BJ (cell line): ENCODE measurements at regions of chr1 and their contacts with region 1.

Region 1: DNA sequence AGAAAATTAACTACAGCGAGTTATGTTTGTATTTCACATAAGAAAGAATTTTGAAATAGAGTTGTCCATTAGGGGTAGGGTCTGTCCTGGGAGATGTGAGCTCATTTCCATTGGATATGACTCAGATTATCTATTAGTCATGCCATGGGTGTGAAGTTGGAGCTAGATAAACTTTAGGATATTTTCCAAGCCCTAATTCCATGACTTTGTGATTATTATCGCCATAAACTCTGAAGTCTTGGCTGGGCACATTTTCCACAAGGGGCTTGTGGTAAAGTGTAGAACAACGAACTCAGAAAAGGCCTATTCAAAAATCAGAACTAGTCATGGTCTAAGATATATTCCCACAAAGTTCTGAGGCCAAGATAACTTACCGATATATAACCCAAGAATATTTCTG is 396.6 kb downstream of the DPYD start:
- DNase-seq: no peak
- H3K4me3 ChIP-seq: no peak overlapping the region
- H3K27me3 ChIP-seq: no peaks in the 10 kb centered on the region
- CTCF ChIP-seq: no peak

Region 2: DNA sequence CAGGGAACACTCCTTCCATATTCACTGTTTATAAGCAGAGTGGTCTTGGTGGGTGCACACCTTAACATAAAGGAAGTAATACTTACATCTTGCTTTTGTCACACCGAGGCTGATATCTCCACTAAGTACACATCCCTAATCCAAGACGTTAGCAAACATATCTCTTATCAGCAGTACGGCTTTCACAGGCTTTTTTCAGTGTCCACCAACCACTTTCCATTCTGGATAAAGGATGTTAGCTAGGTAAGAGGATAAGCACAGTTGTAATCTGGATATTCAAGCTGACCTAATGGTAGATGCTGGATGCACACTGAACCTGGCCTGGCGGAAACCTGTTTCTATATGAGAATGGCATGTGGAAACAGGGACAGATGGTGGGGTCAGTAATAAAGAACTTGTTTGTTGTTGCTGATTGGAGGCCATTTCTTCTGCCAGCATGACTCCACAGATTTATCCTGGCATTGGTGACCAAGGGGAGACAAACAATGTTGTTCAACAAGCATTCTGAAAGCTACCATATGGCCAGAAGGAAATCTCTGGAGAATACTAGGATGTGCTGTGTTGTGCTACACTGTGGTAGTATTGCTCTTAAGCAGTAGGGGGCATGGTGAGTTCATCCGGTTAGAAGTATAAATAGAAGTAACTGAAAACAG is 386.2 kb before region 1 on chr1:
- CTCF ChIA-PET with region 1: interaction called, 21 read pairs
- POLR2A ChIA-PET with region 1: no interaction called
- DNase-seq: no peak
- H3K4me3 ChIP-seq: no peak overlapping the region
- H3K27me3 ChIP-seq: no peaks in the 10 kb centered on the region
- CTCF ChIP-seq: peak; percentile 69

Region 3: GRCh38 chr1:97243973-97244560 is 280.1 kb before region 1 on chr1:
- CTCF ChIA-PET with region 1: interaction called, 14 read pairs
- POLR2A ChIA-PET with region 1: no interaction called
- DNase-seq: no peak
- H3K4me3 ChIP-seq: no peak overlapping the region
- H3K27me3 ChIP-seq: no peaks in the 10 kb centered on the region
- CTCF ChIP-seq: peak; percentile 50

Region 4: DNA sequence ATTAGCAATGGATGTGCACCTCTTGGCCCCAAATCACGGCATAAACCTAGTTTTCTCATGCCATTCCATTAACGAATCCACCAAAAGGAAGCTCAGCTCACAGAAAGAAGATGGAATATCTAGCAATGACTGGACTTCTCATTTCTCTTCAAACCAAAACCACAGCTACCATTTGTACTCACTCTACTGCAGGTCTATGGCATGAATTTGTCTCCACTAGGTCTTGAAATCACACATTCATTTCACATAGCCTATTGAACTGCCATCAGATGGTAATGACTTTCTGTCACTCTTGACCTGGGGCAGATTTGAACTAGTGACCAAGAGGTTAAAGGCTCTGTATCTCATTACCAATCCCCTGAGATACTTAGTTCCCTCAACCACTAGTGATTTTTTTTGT is 13.9 kb after region 1 on chr1:
- CTCF ChIA-PET with region 1: interaction called, 13 read pairs
- POLR2A ChIA-PET with region 1: no interaction called
- DNase-seq: no peak
- H3K4me3 ChIP-seq: no peak overlapping the region
- H3K27me3 ChIP-seq: no peaks in the 10 kb centered on the region
- CTCF ChIP-seq: no peak

Region 5: GRCh38 chr1:97581614-97582051 is 57.4 kb after region 1 on chr1:
- CTCF ChIA-PET with region 1: no interaction called
- POLR2A ChIA-PET with region 1: no interaction called
- DNase-seq: peak; percentile 37
- H3K4me3 ChIP-seq: no peak overlapping the region
- H3K27me3 ChIP-seq: no peaks in the 10 kb centered on the region
- CTCF ChIP-seq: no peak

Region 6: DNA sequence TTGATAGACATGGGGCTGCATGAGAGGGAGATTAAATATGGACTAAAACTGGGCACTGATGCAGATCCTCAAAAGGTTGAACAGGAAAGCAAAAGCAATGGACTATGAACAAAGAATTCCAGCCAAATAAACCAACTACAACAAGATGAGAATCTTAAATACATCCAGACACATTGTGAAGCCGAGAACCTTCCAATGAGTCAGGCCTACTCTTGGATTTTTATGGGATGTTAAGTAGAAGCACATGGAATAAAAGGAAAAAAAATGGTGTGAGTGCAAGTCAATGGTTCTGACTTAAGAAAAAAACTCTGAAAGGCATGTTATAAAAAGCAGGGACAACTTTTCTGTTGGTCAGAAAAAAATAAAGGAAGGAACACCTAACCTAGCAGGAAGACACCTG is 169.4 kb after region 1 on chr1:
- CTCF ChIA-PET with region 1: no interaction called
- POLR2A ChIA-PET with region 1: no interaction called
- DNase-seq: peak; percentile 77
- H3K4me3 ChIP-seq: no peak overlapping the region
- H3K27me3 ChIP-seq: no peaks in the 10 kb centered on the region
- CTCF ChIP-seq: no peak

Region 7: GRCh38 chr1:98637316-98637715 is 1113.1 kb after region 1 on chr1:
- CTCF ChIA-PET with region 1: no interaction called
- POLR2A ChIA-PET with region 1: no interaction called
- DNase-seq: no peak
- H3K4me3 ChIP-seq: no peak overlapping the region
- H3K27me3 ChIP-seq: no peaks in the 10 kb centered on the region
- CTCF ChIP-seq: no peak